Left colon (tissue), 2 donors: ENCODE measurements at regions of chr17 and their contacts with region 1.

Region 1: GRCh38 chr17:64281962-64282727 is 19.1 kb upstream of the TEX2 start:
- DNase-seq: peak in 1 of 2 donors; percentile 66
- ATAC-seq: peak; percentile 53

Region 2: DNA sequence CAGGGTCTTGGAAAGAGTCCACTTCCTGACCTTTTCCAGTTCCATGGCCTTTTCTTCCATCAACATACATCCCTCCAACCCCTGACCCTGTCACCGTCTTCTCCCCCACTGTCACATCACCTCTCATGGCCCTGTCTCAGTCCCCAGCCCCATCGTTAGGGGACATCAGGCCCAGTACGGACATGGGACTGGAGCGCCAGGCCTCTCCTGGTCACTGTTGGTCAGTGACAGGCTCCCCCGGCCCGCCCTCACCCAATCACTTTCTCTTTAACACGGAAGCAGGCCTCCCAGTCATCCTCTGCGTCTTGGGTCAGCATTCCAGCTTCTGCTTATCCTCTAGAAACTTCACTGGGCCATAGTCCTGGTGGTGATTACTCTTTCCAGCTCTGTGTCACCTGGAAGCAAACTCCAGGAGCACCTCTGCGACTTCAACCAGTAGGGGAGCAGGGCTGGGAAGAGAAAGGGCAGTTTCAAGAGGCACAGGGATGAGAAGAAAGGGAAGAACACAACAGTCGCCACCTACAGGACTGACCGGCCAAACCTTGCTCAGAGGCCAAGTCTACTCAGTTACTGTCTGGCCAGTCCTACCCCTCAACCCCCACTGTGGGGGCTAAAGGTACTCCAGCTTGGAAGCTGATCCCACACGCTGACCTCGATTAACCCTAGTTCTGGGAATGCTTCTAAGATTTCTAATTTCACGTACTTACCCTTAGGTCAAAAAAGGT is 245.8 kb before region 1 on chr17:
- intact Hi-C with region 1: loop called in 1 of 2 experiments (anchors 10 kb)
- DNase-seq: no peak
- ATAC-seq: no peak